ENCODE measurements at regions of chr5 and their contacts with region 1.

Region 1: DNA sequence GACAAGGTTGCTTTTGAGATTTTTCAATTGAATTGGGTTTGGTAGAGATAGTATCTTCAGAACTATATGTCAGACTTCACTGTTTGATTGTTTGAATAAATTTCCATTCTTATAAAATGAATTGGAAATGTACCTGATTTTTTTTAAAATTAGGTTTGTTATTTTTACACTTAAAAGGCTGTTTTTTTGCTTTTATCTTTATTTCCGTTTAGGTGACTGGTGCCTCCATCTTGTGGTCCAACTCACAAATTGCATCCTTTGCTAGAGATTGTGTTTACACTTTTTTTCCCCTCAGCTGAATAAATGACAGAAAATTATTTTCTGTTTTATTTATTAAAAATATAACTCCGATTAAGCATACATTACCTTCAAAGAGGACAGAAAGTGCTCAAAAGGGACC is 15.6 kb downstream of the NDUFAF2 start:
- DNase-seq: no peak
- ATAC-seq: no peak
- H3K4me3 ChIP-seq: no peak overlapping the region
- H3K27ac ChIP-seq: no peak overlapping the region
- H3K4me1 ChIP-seq: peaks cover 0 to 14% (median 0%) of the 10 kb centered on the region in 12 donors
- H3K27me3 ChIP-seq: no peaks in the 10 kb centered on the region
- CTCF ChIP-seq: peak in 10 of 12 donors; percentile 19 to 55 (median 38)
- POLR2A ChIP-seq: no peak

Region 2: DNA sequence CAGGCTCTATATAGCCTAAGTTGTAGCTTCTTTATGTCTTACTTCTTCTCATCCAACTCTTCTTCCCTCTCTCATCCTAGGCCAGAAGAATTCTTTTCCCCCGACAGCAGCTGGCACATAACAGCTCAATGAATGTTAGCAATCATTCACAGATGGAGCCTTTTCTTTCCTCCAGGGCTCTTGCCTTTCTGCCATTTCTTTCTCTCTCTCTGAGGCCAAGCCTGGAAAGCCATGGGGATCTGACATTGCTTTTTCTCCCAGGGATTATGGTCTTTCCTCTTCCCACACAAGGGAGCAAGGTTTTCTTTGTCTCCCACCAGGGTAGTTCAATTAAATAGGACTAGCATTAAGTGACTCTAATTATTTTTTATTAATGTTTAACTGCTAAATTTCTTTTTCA is 181.2 kb after region 1 on chr5:
- intact Hi-C with region 1: loop called in 1 of 10 experiments (anchors 10 kb)
- DNase-seq: no peak
- ATAC-seq: no peak
- H3K4me3 ChIP-seq: no peak overlapping the region
- H3K27ac ChIP-seq: no peak overlapping the region
- H3K4me1 ChIP-seq: no peaks in the 10 kb centered on the region
- H3K27me3 ChIP-seq: no peaks in the 10 kb centered on the region
- CTCF ChIP-seq: no peak
- POLR2A ChIP-seq: no peak

Measured in heart left ventricle (tissue), 16 donors.